GM12878 (cell line): ENCODE measurements at regions of chr11 and their contacts with region 1.

Region 1: GRCh38 chr11:57792060-57792541 is 30.5 kb downstream of the CTNND1 start:
- DNase-seq: peak; percentile 93
- ATAC-seq: peak; percentile 92
- H3K4me3 ChIP-seq: peak overlapping the region; percentile 34; the same call in 1 of the 2 replicates
- H3K27ac ChIP-seq: peak overlapping the region; percentile 52
- H3K4me1 ChIP-seq: peaks cover 42% of the 10 kb centered on the region
- H3K27me3 ChIP-seq: no peaks in the 10 kb centered on the region
- CTCF ChIP-seq: no peak
- EP300 ChIP-seq: peak; percentile 49 to 81; a peak in 3 of 4 replicates
- POLR2A ChIP-seq: peak; percentile 62; the same call in 1 of the 2 replicates
- RAD21 ChIP-seq: no peak

Region 2: DNA sequence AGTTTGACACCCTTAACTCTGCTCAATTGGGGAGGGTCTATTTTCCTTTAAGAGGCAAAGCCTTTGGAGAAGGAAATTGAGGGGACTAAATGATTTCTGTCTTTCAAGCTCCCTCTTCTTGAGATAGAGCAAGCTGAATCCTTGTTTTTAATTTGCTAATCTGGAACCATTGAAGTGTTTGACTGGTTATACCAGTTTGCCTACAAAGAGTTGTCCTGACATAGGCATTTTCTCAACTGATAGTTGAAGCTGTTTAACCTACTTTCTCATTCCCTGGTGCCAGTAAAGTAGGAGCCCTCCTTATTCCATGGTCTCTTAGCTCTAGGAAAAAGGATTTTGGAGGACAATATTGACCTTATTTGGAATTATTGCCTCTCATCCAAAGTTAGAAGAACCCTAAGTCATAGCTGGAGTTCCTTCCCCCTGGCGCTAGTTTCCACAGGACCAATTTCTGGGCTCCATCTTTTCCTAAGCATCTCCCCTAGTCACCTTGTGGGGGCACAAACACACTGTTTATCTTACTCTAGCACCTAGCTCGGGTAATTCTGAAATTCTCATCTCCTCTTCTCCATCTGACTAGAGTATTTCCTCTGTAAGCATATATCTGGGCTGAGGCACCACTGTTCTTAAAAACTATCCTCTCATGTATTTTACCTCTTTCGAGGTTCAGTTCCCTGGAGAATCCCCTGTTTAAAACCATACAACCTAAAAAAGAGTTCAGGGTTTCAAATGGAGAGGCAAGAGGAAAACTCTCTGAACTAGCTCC is 116.7 kb before region 1 on chr11:
- CTCF ChIA-PET with region 1: no interaction called
- POLR2A ChIA-PET with region 1: no interaction called
- RAD21 ChIA-PET with region 1: no interaction called
- SMC1A ChIA-PET with region 1: no interaction called
- in situ Hi-C with region 1: no loop called
- intact Hi-C with region 1: no loop called
- DNase-seq: no peak
- ATAC-seq: peak; percentile 54
- H3K4me3 ChIP-seq: peak overlapping the region; percentile 16; the same call in 1 of the 2 replicates
- H3K27ac ChIP-seq: 0 out of 2 replicates have a peak overlapping the region, but pooled peaks have one; percentile 24
- H3K4me1 ChIP-seq: peaks cover 9% of the 10 kb centered on the region; the same call in 1 of the 2 replicates
- H3K27me3 ChIP-seq: no peaks in the 10 kb centered on the region
- CTCF ChIP-seq: peak in 2 of 3 experiments; percentile 18 to 42; a peak in 2 of 6 replicates
- EP300 ChIP-seq: no peak
- POLR2A ChIP-seq: no peak
- RAD21 ChIP-seq: 0 out of 2 replicates have a peak, but pooled peaks have one; percentile 15

Region 3: GRCh38 chr11:57778318-57779037 is 13.6 kb before region 1 on chr11:
- CTCF ChIA-PET with region 1: interaction called, 15 read pairs
- POLR2A ChIA-PET with region 1: interaction called, 12 read pairs
- RAD21 ChIA-PET with region 1: interaction called, 4 read pairs
- SMC1A ChIA-PET with region 1: interaction called, 13 read pairs
- in situ Hi-C with region 1: no loop called
- intact Hi-C with region 1: no loop called
- DNase-seq: no peak
- ATAC-seq: peak; percentile 31
- H3K4me3 ChIP-seq: 0 out of 2 replicates have a peak overlapping the region, but pooled peaks have one; percentile 24
- H3K27ac ChIP-seq: no peak overlapping the region
- H3K4me1 ChIP-seq: peaks cover 13% of the 10 kb centered on the region
- H3K27me3 ChIP-seq: no peaks in the 10 kb centered on the region
- CTCF ChIP-seq: no peak
- EP300 ChIP-seq: no peak
- POLR2A ChIP-seq: no peak
- RAD21 ChIP-seq: no peak

Region 4: DNA sequence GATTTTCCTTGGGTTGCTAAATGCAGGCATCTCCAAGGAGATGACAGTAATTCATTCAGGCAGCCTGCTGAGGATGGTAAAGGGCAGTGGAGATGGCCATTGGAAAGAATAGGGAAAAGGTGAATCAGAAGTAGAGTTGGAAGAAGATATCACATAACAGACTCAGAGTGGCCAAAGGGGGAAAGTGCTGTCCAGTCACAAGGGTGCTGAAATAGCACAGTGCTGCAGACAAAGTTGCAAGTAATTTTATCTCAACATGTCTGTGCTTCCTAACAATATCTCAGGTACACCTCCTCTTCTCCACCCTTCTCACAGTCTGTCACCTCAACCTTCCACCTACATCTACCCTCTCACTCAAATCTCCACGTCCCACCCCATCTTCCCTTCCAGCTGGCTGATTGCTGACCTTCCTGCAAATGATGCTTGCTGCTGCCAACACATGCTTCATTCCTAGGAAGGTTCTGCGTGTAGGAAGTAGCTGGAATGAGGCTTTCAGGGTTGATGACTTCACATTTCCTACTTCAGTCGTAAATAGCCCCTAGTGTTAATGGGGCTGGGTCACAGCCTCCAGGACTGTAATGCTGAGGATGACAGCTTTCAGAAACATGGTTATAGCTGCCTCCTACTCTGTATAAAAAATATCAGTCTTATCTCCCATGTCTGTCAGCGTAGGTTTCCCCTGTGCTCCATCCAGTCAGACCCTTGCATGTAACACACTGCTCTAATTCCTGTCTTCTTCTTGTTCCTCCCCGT is 93.4 kb after region 1 on chr11:
- CTCF ChIA-PET with region 1: no interaction called
- POLR2A ChIA-PET with region 1: no interaction called
- RAD21 ChIA-PET with region 1: no interaction called
- SMC1A ChIA-PET with region 1: no interaction called
- in situ Hi-C with region 1: no loop called
- intact Hi-C with region 1: no loop called
- DNase-seq: no peak
- ATAC-seq: no peak
- H3K4me3 ChIP-seq: no peak overlapping the region
- H3K27ac ChIP-seq: no peak overlapping the region
- H3K4me1 ChIP-seq: no peaks in the 10 kb centered on the region
- H3K27me3 ChIP-seq: no peaks in the 10 kb centered on the region
- CTCF ChIP-seq: no peak
- EP300 ChIP-seq: no peak
- POLR2A ChIP-seq: no peak
- RAD21 ChIP-seq: no peak

Region 5: DNA sequence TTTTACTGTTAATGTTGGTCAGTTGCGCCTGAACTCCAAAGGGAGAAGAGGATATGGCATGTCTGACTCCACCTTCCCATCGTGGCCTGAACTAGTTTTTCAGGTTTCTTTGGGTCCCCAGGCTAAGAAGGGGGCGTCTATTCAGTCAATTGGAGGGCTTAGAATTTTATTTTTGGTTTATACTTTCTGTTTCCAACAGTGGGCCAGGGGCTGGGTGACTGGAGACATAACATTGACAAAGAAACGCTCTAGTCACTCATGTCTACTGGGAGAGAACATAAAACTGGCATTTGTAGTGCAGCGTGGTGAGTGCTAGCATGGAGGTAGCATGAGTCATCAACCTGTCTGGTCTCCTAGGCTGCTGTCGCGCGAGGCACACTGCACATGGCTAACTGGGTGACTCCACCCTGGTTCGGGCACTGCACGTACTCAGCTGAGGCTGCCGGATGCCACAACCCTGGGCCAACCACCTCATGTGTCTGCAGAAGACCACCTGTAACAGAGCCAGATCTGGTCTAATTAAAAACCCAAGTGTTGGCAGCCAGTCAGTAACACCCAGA is 111.5 kb after region 1 on chr11:
- CTCF ChIA-PET with region 1: no interaction called
- POLR2A ChIA-PET with region 1: no interaction called
- RAD21 ChIA-PET with region 1: no interaction called
- SMC1A ChIA-PET with region 1: no interaction called
- in situ Hi-C with region 1: no loop called
- intact Hi-C with region 1: no loop called
- DNase-seq: no peak
- ATAC-seq: no peak
- H3K4me3 ChIP-seq: no peak overlapping the region
- H3K27ac ChIP-seq: no peak overlapping the region
- H3K4me1 ChIP-seq: no peaks in the 10 kb centered on the region
- H3K27me3 ChIP-seq: no peaks in the 10 kb centered on the region; a peak in 1 of 4 replicates
- CTCF ChIP-seq: no peak
- EP300 ChIP-seq: no peak
- POLR2A ChIP-seq: no peak
- RAD21 ChIP-seq: no peak